RWPE1 (cell line): ENCODE measurements at regions of chr20 and their contacts with region 1.

Region 1: DNA sequence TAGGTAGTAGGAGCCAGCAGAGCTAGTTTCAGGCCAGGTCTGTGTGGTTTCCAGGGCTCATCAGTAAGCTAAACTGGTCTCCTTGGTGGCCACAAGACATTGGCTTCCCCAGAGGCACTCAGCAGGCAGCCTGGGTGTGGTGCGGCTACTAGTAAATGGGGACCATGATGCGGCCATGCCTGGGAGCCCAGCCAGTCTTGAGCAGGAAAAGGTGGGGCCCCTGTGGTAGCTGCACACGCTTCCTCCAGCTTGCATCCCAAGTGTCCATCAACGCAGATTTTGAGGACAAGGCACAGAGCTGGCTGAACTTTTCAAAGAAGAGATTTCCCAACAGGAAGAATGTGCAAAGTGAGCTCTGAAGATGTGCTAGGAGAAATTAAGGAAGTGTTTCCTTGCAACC is 107.4 kb upstream of the NAA20 start:
- DNase-seq: no peak
- H3K27ac ChIP-seq: peak overlapping the region; percentile 81
- CTCF ChIP-seq: no peak

Region 2: GRCh38 chr20:20585146-20585545 is 675.4 kb after region 1 on chr20:
- CTCF ChIA-PET with region 1: interaction called, 11 read pairs
- POLR2A ChIA-PET with region 1: no interaction called
- DNase-seq: no peak
- H3K27ac ChIP-seq: no peak overlapping the region
- CTCF ChIP-seq: no peak